ENCODE measurements at regions of chr22 and their contacts with region 1.

Region 1: GRCh38 chr22:36387752-36388518 is at the start of gene MYH9:
- DNase-seq: peak; percentile 100
- ATAC-seq: peak; percentile 93
- H3K4me3 Mint-ChIP-seq: peak within 1 kb of the TSS; percentile 87
- H3K27ac Mint-ChIP-seq: peak within 1 kb of the TSS; percentile 95
- H3K4me1 Mint-ChIP-seq: peaks cover 40% of the 10 kb centered on the region
- H3K27me3 Mint-ChIP-seq: no peaks in the 10 kb centered on the region
- CTCF ChIP-seq: no peak
- total RNA-seq, gene MYH9: 272 to 288 TPM (median 277 TPM) in 3 replicates

Region 2: DNA sequence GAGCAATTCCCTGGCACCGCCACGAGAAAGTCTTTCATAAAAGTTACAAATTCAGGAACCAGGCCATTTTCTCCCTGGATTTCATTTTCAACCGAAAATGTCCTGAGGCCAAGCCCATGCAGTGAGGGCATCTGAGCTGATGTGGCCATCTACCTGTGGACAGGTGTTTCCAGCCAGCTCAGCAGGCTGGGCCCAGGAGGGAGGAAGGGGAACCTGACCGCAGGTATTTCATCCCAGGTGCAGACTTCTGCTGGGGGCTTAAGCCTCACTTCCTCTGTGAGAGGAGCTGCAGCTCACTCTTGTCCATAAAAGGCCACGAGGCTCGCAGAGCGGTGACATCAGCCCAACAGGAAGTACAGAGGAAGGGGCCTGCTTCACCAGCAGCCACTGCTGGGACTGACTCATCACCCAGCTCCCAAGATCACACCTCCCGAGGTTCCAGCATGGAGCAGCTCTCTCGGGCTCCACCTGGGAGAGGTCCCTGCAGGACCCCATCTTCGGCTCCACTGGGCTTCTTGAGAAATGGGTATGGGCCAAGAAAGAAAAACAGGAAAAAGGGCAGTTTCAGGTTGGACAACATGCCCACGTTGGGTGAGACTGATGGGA is 56.5 kb before region 1 on chr22:
- CTCF ChIA-PET with region 1: interaction called, 6 read pairs
- POLR2A ChIA-PET with region 1: interaction called, 18 read pairs
- DNase-seq: peak; percentile 54
- ATAC-seq: peak; percentile 32
- H3K4me3 Mint-ChIP-seq: no peak overlapping the region
- H3K27ac Mint-ChIP-seq: peak overlapping the region; percentile 100
- H3K4me1 Mint-ChIP-seq: peaks cover 81% of the 10 kb centered on the region
- H3K27me3 Mint-ChIP-seq: no peaks in the 10 kb centered on the region
- CTCF ChIP-seq: no peak

Region 3: DNA sequence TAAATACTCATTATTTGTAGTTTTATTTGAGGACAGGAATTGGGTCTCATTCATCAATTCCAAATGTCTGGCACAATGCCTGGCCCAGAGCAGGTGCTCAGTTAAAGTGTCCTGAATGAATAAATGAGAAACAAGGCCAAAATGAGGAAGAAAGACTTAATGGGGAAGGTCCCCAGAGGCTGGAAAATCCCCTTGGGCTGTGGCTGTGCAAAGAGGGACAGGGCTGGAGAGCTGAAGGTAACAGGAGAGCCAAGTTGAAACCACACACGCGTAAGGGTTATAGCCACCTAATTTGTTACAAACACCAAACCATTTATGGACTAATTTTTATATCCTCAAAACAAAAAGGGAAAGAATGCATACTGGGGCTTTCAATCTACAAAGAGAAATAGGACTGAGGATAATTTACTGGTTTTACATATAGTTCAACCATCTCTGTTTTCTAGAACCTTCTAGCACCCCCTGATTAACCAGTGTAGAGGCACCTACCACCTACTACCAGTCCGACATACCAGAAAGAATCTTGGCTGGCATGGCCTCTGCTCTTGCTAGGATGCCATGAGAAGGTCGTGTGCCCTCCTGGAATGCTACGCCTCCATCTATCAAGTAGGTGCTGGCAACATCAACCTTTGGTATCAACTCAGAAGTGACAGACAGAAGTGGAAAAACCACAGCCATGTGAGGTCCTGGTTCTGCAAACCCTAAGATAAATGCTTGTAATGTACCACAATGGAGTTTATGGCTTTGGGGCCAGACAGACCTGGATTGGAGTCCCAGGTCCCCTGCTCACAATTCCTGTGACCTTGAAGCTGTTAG is 28.5 kb before region 1 on chr22:
- CTCF ChIA-PET with region 1: no interaction called
- POLR2A ChIA-PET with region 1: interaction called, 10 read pairs
- DNase-seq: no peak
- ATAC-seq: no peak
- H3K4me3 Mint-ChIP-seq: no peak overlapping the region
- H3K27ac Mint-ChIP-seq: peak overlapping the region; percentile 85
- H3K4me1 Mint-ChIP-seq: peaks cover 88% of the 10 kb centered on the region
- H3K27me3 Mint-ChIP-seq: no peaks in the 10 kb centered on the region
- CTCF ChIP-seq: no peak

Region 4: DNA sequence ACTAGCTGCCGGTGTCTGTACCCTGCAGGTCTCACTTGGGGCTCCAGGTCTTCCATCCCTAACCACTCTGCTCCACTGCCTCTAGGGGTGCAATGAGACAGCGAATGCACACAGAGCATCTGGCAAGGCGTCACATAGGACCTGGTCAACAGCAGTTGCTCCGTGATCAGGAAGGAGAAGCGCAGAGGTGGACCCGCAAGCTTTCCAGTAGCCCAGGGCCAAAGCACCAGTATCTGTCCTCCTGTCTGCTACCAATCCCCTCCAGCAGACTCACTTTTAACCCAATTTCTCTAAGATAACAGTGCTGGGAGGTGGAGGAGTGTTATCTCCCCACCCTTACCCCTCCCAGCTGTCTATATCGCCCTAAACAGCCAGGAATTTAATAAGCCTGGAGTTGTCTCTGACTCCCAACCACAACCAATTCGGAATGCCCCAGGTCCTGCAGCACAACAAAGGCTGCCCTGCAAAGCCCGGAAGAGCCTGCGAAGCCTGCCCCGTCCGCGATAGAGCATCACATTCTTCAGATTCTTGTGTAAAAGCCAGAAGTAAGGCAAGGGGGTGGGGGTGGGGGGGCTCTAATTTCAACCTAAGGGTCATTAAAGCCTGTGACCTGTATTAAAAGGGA is 19.5 kb before region 1 on chr22:
- CTCF ChIA-PET with region 1: interaction called, 5 read pairs
- POLR2A ChIA-PET with region 1: interaction called, 66 read pairs
- DNase-seq: peak; percentile 73
- ATAC-seq: peak; percentile 84
- H3K4me3 Mint-ChIP-seq: peak overlapping the region; percentile 22; the same call in 1 of the 2 replicates
- H3K27ac Mint-ChIP-seq: peak overlapping the region; percentile 100
- H3K4me1 Mint-ChIP-seq: peaks cover 96% of the 10 kb centered on the region
- H3K27me3 Mint-ChIP-seq: no peaks in the 10 kb centered on the region
- CTCF ChIP-seq: no peak

Region 5: DNA sequence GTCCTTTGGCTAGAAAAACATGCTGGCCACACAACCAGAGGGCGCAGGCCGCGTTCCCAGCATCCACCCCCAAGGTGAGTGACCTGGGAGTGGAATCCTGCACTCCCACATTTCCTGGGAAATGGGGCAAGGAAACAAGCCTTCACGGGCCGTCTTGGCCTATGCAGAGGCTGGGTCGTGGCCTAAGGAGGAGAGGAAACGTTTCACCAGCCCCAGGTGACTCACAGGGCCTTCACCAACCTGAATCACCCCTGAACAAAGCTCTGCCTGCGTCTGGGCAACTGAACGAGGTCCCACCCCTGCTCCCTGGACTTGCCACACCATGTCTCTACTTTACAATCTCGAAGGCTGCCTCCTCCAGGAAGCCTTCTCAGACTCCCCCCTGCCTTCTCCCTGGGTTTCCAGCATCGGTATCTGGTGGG is 13.3 kb before region 1 on chr22:
- CTCF ChIA-PET with region 1: interaction called, 3 read pairs
- POLR2A ChIA-PET with region 1: interaction called, 66 read pairs
- DNase-seq: no peak
- ATAC-seq: no peak
- H3K4me3 Mint-ChIP-seq: no peak overlapping the region
- H3K27ac Mint-ChIP-seq: peak overlapping the region; percentile 93
- H3K4me1 Mint-ChIP-seq: peaks cover 86% of the 10 kb centered on the region
- H3K27me3 Mint-ChIP-seq: no peaks in the 10 kb centered on the region
- CTCF ChIP-seq: no peak